OCI-LY7 (cell line): ENCODE measurements at regions of chr12 and their contacts with region 1.

Region 1: DNA sequence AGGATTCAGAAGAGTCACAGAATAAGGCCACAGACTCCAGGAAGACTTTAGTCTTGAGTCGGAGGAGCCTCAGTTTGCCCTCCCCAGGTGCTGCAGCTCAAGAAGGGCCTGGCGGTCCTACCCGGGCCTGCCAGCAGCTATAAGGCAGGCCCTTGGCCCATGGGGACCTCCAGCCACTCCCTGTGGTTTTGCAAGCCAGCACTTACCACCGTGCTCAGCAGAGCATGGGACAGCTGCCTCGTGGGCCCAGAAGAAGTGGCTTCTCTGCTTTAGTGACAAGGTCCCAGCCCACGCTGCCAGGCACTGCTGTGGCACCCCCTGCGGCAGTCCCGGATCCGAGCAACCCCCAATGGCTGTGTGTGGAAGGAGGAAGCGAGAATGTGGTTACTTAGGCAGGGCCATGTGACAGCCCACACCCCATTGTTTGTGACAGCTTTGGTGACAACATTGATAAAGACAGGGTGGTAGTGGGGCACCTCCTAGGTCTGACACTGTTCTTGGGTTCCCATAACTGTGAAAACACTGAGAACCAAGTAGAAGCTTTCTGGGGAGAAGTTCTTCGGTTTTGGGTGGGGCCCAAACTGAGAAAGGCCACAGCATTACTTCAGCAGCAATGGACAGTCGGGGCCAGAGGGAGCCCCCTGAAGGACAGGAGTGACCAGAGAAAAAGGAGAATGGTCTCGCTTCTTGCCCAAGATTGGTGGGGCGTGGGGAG is at the start of gene SELPLG:
- DNase-seq: peak; percentile 97
- H3K4me3 ChIP-seq: peak within 1 kb of the TSS; percentile 75
- H3K27ac ChIP-seq: peak within 1 kb of the TSS; percentile 99
- H3K4me1 ChIP-seq: peaks cover 88% of the 10 kb centered on the region
- CTCF ChIP-seq: peak; percentile 62; the same call in 1 of the 2 replicates
- total RNA-seq, gene SELPLG: 16.9 and 20.0 TPM in 2 replicates

Region 2: GRCh38 chr12:108505129-108505528 is 128.6 kb before region 1 on chr12:
- CTCF ChIA-PET with region 1: no interaction called
- POLR2A ChIA-PET with region 1: no interaction called
- intact Hi-C with region 1: no loop called
- DNase-seq: no peak
- H3K4me3 ChIP-seq: no peak overlapping the region
- H3K27ac ChIP-seq: no peak overlapping the region
- H3K4me1 ChIP-seq: no peaks in the 10 kb centered on the region
- CTCF ChIP-seq: no peak

Region 3: GRCh38 chr12:108542320-108542719 is 91.4 kb before region 1 on chr12:
- CTCF ChIA-PET with region 1: interaction called, 3 read pairs
- POLR2A ChIA-PET with region 1: interaction called, 15 read pairs
- intact Hi-C with region 1: no loop called
- DNase-seq: no peak
- H3K4me3 ChIP-seq: peak overlapping the region; percentile 55
- H3K27ac ChIP-seq: peak overlapping the region; percentile 95
- H3K4me1 ChIP-seq: peaks cover 43% of the 10 kb centered on the region
- CTCF ChIP-seq: no peak

Region 4: DNA sequence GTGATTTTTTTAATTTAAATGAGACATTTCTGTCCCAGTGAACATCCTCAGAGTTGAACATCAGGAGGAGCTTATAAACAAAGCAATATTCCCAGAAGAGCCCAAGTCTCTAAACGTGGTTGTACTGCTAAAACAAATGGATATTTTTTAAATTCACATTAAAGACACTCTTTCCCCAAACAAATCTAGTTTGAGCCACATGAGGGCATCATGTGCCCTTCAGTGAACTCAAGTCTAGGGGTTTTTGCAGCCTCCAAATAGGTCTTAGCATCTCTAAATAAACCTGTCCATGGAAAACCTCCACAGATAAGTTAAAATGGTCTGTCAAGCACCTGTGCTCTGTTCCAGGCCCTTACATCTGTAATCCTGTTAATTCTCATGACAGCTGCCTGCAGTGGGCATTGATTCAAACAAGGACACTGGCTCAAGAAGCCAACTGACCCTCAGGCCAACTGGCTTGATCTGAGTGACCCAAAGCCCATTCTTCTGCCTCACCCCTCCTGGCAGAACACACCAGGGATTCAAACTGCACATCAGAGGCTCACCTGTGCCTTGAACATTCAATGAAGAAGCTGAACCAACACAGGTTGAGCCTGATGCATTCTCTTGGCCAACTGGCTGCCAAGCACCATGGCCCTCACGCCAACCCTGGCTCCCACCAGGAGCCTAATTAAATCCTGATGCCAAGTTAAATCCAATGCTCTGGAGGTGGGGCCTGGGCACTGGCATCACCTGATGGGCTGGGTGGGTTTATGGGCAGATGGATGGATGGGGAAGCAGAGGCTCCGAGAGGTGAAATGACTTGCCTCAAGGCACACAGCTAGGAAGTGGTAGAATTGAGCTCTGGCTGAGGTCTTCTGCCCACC is 62.7 kb before region 1 on chr12:
- CTCF ChIA-PET with region 1: interaction called, 4 read pairs
- POLR2A ChIA-PET with region 1: interaction called, 309 read pairs
- intact Hi-C with region 1: loop called (anchors 2 kb)
- DNase-seq: peak; percentile 75
- H3K4me3 ChIP-seq: no peak overlapping the region
- H3K27ac ChIP-seq: peak overlapping the region; percentile 93
- H3K4me1 ChIP-seq: peaks cover 83% of the 10 kb centered on the region
- CTCF ChIP-seq: peak; percentile 76

Region 5: GRCh38 chr12:108649669-108650068 is 16.0 kb after region 1 on chr12:
- CTCF ChIA-PET with region 1: no interaction called
- POLR2A ChIA-PET with region 1: interaction called, 174 read pairs
- intact Hi-C with region 1: no loop called
- DNase-seq: no peak
- H3K4me3 ChIP-seq: no peak overlapping the region
- H3K27ac ChIP-seq: no peak overlapping the region
- H3K4me1 ChIP-seq: peaks cover 82% of the 10 kb centered on the region
- CTCF ChIP-seq: no peak

Region 6: GRCh38 chr12:108803428-108804105 is 169.9 kb after region 1 on chr12:
- CTCF ChIA-PET with region 1: interaction called, 3 read pairs
- POLR2A ChIA-PET with region 1: interaction called, 10 read pairs
- intact Hi-C with region 1: no loop called
- DNase-seq: peak; percentile 84
- H3K4me3 ChIP-seq: no peak overlapping the region
- H3K27ac ChIP-seq: no peak overlapping the region
- H3K4me1 ChIP-seq: peaks cover 25% of the 10 kb centered on the region
- CTCF ChIP-seq: peak; percentile 99

Region 7: GRCh38 chr12:108856428-108857157 is 222.9 kb after region 1 on chr12:
- CTCF ChIA-PET with region 1: no interaction called
- POLR2A ChIA-PET with region 1: no interaction called
- intact Hi-C with region 1: no loop called
- DNase-seq: peak; percentile 26
- H3K4me3 ChIP-seq: peak overlapping the region; percentile 68
- H3K27ac ChIP-seq: no peak overlapping the region
- H3K4me1 ChIP-seq: peaks cover 38% of the 10 kb centered on the region
- CTCF ChIP-seq: no peak

Region 8: DNA sequence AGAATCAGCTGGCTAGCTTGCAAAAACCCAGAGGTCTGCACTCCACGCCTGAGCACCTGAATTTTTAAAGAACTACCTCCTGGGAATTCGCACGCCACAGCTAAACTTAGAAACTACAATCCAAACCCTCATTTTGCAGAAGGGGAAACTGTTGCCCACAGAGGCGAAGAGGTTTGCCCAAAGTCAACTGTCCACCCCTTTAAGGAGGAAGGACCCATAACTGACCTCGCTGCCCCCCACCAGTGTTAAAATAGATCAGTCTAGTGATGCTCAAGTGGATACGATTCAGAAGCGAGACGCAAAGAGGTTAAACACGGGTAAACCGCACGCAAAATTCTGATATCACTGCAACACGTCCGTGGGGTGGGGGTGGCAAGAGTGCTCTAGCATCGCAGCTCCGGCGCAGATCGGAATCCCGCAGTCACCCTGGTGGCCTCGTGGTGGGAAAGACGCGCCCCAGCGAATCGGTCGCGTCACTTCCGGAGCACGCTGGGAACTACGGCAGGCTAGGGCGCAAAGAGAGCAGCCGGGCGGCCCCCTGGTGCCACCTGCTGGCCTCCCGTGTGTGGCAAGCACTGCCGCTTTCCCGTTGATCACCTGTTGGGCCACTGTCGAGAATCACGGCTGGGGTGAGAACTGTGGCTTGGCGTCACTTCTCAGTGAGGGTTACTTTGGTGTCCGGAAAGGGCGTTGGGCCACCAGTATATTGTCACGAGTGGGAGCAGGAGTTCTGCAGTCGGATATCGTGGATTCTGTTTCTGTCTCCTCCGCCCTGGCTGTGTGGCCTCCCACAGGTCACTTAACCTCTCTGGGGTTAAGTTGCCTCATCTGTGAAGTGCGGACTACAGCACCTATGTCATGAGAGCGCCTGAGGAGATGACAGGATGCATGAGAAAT is 459.6 kb after region 1 on chr12 and contains the start of gene ALKBH2:
- CTCF ChIA-PET with region 1: no interaction called
- POLR2A ChIA-PET with region 1: interaction called, 4 read pairs
- intact Hi-C with region 1: loop called (anchors 10 kb)
- DNase-seq: peak; percentile 96
- H3K4me3 ChIP-seq: peak within 1 kb of the TSS; percentile 84
- H3K27ac ChIP-seq: peak within 1 kb of the TSS; percentile 63
- H3K4me1 ChIP-seq: peaks cover 62% of the 10 kb centered on the region
- CTCF ChIP-seq: peak; percentile 89
- total RNA-seq, gene ALKBH2: 70.3 and 76.8 TPM in 2 replicates